HEK293 (cell line): ENCODE measurements at regions of chr17 and their contacts with region 1.

Region 1: GRCh38 chr17:28552246-28552999 is at the start of gene UNC119:
- H3K4me3 ChIP-seq: peak within 1 kb of the TSS; percentile 74
- H3K27ac ChIP-seq: peak within 1 kb of the TSS; percentile 83; the same call in 1 of the 2 replicates
- H3K4me1 ChIP-seq: peaks cover 14% of the 10 kb centered on the region
- CTCF ChIP-seq: peak; percentile 20; the same call in 1 of the 2 replicates

Region 2: GRCh38 chr17:28524476-28525368 is 27.7 kb before region 1 on chr17:
- CTCF ChIA-PET with region 1: interaction called, 17 read pairs
- POLR2A ChIA-PET with region 1: no interaction called
- H3K4me3 ChIP-seq: no peak overlapping the region
- H3K27ac ChIP-seq: 0 out of 2 replicates have a peak overlapping the region, but pooled peaks have one; percentile 7
- H3K4me1 ChIP-seq: peaks cover 5% of the 10 kb centered on the region; the same call in 1 of the 2 replicates
- CTCF ChIP-seq: no peak

Region 3: DNA sequence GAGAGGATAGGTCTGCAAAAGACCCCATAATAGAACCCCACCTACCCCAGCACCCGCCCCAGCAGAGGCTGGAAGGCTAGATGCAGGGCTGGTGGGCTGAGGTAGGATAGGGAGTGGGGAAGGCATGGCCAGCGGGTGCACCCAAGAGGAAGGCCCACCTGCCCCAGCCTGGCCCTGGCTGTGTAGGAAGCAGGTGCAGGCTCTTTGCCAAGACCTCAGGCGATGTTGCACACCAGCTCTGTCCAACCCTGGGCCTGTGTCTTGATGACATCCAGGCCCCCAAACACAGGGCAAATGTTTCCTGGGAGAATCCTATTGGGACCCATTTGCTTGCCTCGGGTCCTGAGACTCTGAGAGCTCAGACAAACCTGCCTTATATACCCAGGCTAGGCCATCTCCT is 12.2 kb before region 1 on chr17:
- CTCF ChIA-PET with region 1: interaction called, 15 read pairs
- POLR2A ChIA-PET with region 1: interaction called, 4 read pairs
- H3K4me3 ChIP-seq: no peak overlapping the region
- H3K27ac ChIP-seq: no peak overlapping the region
- H3K4me1 ChIP-seq: no peaks in the 10 kb centered on the region
- CTCF ChIP-seq: no peak

Region 4: DNA sequence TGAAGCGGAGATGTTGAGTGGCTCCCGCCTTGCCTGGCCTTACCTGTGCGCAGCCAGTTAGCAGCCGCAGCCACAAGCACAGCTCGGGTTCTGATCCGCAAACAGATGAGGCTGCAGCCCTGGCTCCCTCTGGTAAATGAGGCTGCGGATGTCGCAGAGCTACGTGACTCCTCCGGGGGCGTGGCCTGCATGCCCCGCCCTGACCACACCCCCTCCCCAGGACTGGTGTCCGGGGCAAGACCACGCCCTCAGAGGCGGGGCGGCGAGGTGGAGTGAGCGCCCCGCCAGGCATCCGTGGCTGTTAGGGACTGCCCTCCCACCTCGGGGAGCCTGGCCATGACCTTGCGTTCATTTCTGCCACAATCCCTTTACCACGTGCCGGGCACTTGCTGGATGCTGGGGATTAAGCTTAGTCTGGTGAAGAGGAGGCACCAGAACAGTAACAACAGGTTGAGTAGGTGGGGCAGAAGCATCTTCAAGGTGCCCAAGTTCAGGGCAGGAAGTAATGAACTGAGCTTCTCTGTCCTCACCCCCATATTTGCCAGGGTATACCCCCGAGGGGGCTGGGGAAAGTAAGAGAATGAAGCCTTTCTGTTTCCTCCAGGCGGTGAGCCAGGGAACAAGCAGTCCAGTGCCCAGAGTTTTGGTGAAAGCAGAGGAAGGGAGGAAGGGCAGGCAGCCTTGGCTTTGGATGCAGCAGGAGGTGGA is 24.5 kb after region 1 on chr17 and contains the start of gene ALDOC:
- CTCF ChIA-PET with region 1: interaction called, 26 read pairs
- POLR2A ChIA-PET with region 1: interaction called, 68 read pairs
- H3K4me3 ChIP-seq: no peak within 1 kb of the TSS
- H3K27ac ChIP-seq: no peak within 1 kb of the TSS
- H3K4me1 ChIP-seq: peaks cover 2% of the 10 kb centered on the region; the same call in 1 of the 2 replicates
- CTCF ChIP-seq: no peak

Region 5: DNA sequence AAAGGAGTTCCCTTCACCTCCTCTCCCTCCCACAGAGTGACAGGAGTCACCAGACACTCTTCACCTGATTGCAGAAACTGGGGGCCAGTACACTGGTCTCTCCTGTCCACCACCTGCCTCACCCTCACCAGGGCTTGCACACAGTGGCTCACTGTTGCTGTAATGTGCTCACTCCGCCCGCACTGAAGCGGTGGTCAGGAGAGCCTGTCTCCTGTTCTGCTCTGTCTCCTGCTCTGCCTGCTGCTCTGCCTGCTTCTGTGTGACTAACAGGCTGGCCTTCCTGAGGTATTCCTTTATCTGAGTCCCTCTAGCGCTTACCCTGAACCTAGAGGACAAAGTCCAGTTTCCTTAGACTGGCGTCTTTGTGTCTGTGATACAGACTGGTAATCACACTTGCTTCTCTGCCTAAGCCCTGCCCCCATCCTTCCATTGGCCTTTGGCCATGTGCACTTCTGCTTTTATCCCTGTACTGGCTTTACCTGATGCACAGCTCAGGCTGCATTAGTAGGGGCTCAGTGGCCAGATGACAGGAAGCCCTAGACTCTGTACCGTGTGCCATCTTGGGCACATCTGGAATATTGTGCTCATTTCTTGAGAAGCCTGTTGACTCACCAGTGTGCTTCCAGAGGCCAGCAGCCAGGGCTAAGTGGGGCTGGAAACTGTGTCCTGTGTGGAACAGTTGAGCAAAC is 146.0 kb after region 1 on chr17:
- CTCF ChIA-PET with region 1: no interaction called
- POLR2A ChIA-PET with region 1: no interaction called
- H3K4me3 ChIP-seq: no peak overlapping the region
- H3K27ac ChIP-seq: no peak overlapping the region
- H3K4me1 ChIP-seq: no peaks in the 10 kb centered on the region
- CTCF ChIP-seq: no peak